Activated naive CD4-positive, alpha-beta T cell treated with anti-CD3 and anti-CD28 coated beads for 36 hours (primary cell): ENCODE measurements at regions of chr5 and their contacts with region 1.

Region 1: GRCh38 chr5:59390074-59390659 is 503.4 kb downstream of the PDE4D start:
- DNase-seq: peak; percentile 22
- H3K4me3 Mint-ChIP-seq: no peak overlapping the region
- H3K27ac Mint-ChIP-seq: no peak overlapping the region
- H3K4me1 Mint-ChIP-seq: no peaks in the 10 kb centered on the region
- H3K27me3 Mint-ChIP-seq: peaks cover 6% of the 10 kb centered on the region

Region 2: DNA sequence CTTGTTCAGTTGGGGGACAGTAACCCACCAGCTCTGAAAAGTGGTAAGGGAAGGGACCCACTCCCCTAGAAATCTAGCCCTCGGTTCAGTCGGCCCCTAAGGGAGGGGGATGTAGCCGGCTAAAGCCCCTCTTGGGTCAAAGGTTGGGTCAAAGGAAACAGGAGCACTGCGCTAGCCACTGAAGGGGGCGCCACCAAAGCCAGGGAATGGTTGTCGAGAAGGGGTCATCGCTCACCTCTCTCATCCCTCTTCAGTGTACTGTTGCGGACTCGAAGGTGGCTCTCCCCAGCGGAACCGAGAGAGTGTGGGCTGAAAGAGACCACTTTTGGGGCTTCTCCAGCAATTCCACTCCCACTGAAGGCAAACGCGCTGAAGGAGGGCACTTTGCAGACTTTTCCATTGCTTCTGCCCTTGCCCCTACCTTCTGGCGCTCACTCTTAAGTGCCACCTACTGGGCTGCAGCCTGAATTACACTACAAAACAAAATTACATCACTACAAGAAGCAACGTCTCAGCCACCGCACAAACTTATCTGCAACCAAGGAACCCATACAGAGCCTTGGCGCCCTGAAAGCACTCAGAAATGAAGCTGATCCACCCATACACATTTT is 106.5 kb after region 1 on chr5:
- CTCF ChIA-PET with region 1: interaction called, 14 read pairs
- intact Hi-C with region 1: loop called (anchors 1 kb)
- DNase-seq: peak; percentile 25
- H3K4me3 Mint-ChIP-seq: no peak overlapping the region
- H3K27ac Mint-ChIP-seq: no peak overlapping the region
- H3K4me1 Mint-ChIP-seq: no peaks in the 10 kb centered on the region
- H3K27me3 Mint-ChIP-seq: peaks cover 6% of the 10 kb centered on the region

Region 3: GRCh38 chr5:59660737-59661136 is 270.6 kb after region 1 on chr5:
- CTCF ChIA-PET with region 1: interaction called, 3 read pairs
- intact Hi-C with region 1: loop called (anchors 2 kb)
- DNase-seq: no peak
- H3K4me3 Mint-ChIP-seq: no peak overlapping the region
- H3K27ac Mint-ChIP-seq: no peak overlapping the region
- H3K4me1 Mint-ChIP-seq: peaks cover 5% of the 10 kb centered on the region
- H3K27me3 Mint-ChIP-seq: no peaks in the 10 kb centered on the region

Region 4: GRCh38 chr5:59673438-59674058 is 283.4 kb after region 1 on chr5:
- CTCF ChIA-PET with region 1: interaction called, 33 read pairs
- intact Hi-C with region 1: loop called (anchors 1 kb)
- DNase-seq: no peak
- H3K4me3 Mint-ChIP-seq: no peak overlapping the region
- H3K27ac Mint-ChIP-seq: no peak overlapping the region
- H3K4me1 Mint-ChIP-seq: no peaks in the 10 kb centered on the region
- H3K27me3 Mint-ChIP-seq: no peaks in the 10 kb centered on the region

Region 5: GRCh38 chr5:59724482-59725391 is 334.6 kb after region 1 on chr5:
- CTCF ChIA-PET with region 1: interaction called, 3 read pairs
- intact Hi-C with region 1: loop called (anchors 1 kb)
- DNase-seq: peak; percentile 47
- H3K4me3 Mint-ChIP-seq: no peak overlapping the region
- H3K27ac Mint-ChIP-seq: no peak overlapping the region
- H3K4me1 Mint-ChIP-seq: peaks cover 3% of the 10 kb centered on the region
- H3K27me3 Mint-ChIP-seq: peaks cover 4% of the 10 kb centered on the region

Region 6: DNA sequence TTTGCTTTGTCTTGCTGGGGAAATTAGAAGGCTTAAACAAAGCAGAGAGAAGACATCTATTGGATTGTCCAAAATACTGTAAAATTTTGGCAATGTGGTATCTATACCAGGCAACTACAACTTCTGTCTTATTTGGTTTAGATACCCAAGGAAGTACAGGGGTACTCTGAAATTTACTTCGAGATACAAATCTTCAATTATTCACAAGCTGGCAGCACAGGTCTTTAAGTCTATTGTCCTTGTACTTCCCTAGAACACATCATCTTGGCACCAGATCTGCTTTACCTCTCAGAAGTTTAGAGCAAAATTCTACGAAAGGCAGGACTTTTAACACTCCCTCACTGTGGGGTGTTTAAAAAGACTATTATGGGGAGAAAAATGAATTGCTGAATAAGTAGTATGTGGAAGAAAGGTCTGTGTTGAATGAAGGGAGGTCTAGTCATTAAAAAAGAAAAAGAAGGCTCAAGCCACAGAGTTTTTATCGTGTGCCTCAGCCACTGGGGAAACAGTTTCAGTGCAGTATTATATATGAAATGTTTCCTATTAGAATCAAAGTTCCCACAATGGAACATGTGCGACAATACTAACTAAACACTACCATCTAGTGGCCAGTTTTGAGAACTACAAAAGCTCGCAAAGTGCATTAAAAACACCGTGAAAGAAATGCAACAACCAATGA is 409.6 kb after region 1 on chr5:
- CTCF ChIA-PET with region 1: interaction called, 21 read pairs
- intact Hi-C with region 1: loop called (anchors 1 kb)
- DNase-seq: peak; percentile 30
- H3K4me3 Mint-ChIP-seq: no peak overlapping the region
- H3K27ac Mint-ChIP-seq: no peak overlapping the region
- H3K4me1 Mint-ChIP-seq: no peaks in the 10 kb centered on the region
- H3K27me3 Mint-ChIP-seq: peaks cover 7% of the 10 kb centered on the region